ENCODE measurements at regions of chr3 and their contacts with region 1.

Region 1: DNA sequence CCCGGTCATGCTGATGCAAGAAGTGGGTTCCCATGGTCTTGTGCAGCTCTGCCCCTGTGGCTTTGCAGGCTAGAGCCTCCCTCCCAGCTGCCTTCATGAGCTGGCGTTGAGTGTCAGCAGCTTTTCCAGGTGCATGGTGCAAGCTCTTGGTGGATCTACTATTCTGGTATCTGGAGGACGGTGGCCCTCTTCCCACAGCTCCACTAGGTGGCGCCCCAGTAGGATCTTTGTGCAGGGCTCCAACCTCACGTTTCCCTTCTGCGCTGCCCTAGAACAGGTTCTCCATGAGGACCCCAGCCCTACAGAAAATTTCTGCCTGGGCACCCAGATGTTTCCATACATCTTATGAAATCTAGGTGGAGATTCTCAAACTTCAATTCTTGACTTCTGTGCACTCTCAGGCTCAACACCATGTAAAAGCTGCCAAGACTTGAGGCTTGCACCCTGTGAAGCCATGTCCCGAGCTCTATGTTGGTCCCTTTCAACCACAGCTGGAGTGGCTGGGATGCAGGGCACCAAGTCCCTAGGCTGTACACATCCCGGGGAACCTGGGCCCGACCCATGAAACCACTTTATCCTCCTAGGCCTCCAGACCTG is 238.4 kb upstream of the MDFIC2 start:
- DNase-seq: peak; percentile 43 to 82 (median 68)
- ATAC-seq: peak; percentile 76
- H3K4me3 ChIP-seq: no peak overlapping the region
- H3K4me3 Mint-ChIP-seq: no peak overlapping the region
- H3K27ac ChIP-seq: no peak overlapping the region
- H3K27ac Mint-ChIP-seq: no peak overlapping the region
- H3K4me1 ChIP-seq: no peaks in the 10 kb centered on the region
- H3K4me1 Mint-ChIP-seq: no peaks in the 10 kb centered on the region
- H3K27me3 ChIP-seq: no peaks in the 10 kb centered on the region
- H3K27me3 Mint-ChIP-seq: peaks cover 2% of the 10 kb centered on the region
- CTCF ChIP-seq: peak; percentile 60

Region 2: GRCh38 chr3:70539908-70540307 is 10.9 kb before region 1 on chr3:
- CTCF ChIA-PET with region 1: interaction called, 12 read pairs
- POLR2A ChIA-PET with region 1: no interaction called
- intact Hi-C with region 1: no loop called
- DNase-seq: peak in 1 of 9 experiments; percentile 3
- ATAC-seq: no peak
- H3K4me3 ChIP-seq: no peak overlapping the region
- H3K4me3 Mint-ChIP-seq: no peak overlapping the region
- H3K27ac ChIP-seq: no peak overlapping the region
- H3K27ac Mint-ChIP-seq: no peak overlapping the region
- H3K4me1 ChIP-seq: no peaks in the 10 kb centered on the region
- H3K4me1 Mint-ChIP-seq: no peaks in the 10 kb centered on the region
- H3K27me3 ChIP-seq: no peaks in the 10 kb centered on the region
- H3K27me3 Mint-ChIP-seq: peaks cover 11% of the 10 kb centered on the region
- CTCF ChIP-seq: no peak

Region 3: DNA sequence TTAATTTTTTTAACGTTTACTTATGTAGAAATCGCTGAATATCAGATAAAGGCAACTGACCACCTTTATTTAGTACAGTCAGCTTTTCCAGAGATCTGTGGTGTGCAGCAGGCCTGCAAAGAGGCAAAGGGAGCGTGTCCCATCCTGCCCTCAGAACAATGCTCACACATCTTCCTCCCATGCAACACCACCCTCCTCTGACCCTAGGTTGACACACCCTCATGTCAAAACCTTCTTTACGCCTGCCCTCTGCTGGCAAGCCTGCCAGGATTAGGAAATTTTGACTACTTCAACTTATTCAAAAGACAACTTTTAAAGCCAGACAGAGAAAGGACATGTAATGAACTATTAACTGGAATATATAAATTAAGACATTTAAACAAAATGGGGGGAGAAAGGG is 519.0 kb after region 1 on chr3:
- CTCF ChIA-PET with region 1: no interaction called
- POLR2A ChIA-PET with region 1: no interaction called
- intact Hi-C with region 1: loop called (anchors 1 to 10 kb)
- DNase-seq: peak; percentile 57 to 81 (median 72)
- ATAC-seq: peak; percentile 29
- H3K4me3 ChIP-seq: no peak overlapping the region
- H3K4me3 Mint-ChIP-seq: no peak overlapping the region
- H3K27ac ChIP-seq: no peak overlapping the region
- H3K27ac Mint-ChIP-seq: peak overlapping the region; percentile 91
- H3K4me1 ChIP-seq: peaks cover 89% of the 10 kb centered on the region
- H3K4me1 Mint-ChIP-seq: peaks cover 84% of the 10 kb centered on the region
- H3K27me3 ChIP-seq: no peaks in the 10 kb centered on the region
- H3K27me3 Mint-ChIP-seq: no peaks in the 10 kb centered on the region
- CTCF ChIP-seq: peak; percentile 67

Region 4: GRCh38 chr3:71591101-71591500 is 1040.3 kb after region 1 on chr3:
- CTCF ChIA-PET with region 1: interaction called, 55 read pairs
- POLR2A ChIA-PET with region 1: no interaction called
- intact Hi-C with region 1: loop called (anchors 1 kb)
- DNase-seq: no peak
- ATAC-seq: no peak
- H3K4me3 ChIP-seq: no peak overlapping the region
- H3K4me3 Mint-ChIP-seq: no peak overlapping the region
- H3K27ac ChIP-seq: no peak overlapping the region
- H3K27ac Mint-ChIP-seq: no peak overlapping the region
- H3K4me1 ChIP-seq: peaks cover 4% of the 10 kb centered on the region
- H3K4me1 Mint-ChIP-seq: peaks cover 6% of the 10 kb centered on the region
- H3K27me3 ChIP-seq: no peaks in the 10 kb centered on the region
- H3K27me3 Mint-ChIP-seq: no peaks in the 10 kb centered on the region
- CTCF ChIP-seq: no peak

Region 5: DNA sequence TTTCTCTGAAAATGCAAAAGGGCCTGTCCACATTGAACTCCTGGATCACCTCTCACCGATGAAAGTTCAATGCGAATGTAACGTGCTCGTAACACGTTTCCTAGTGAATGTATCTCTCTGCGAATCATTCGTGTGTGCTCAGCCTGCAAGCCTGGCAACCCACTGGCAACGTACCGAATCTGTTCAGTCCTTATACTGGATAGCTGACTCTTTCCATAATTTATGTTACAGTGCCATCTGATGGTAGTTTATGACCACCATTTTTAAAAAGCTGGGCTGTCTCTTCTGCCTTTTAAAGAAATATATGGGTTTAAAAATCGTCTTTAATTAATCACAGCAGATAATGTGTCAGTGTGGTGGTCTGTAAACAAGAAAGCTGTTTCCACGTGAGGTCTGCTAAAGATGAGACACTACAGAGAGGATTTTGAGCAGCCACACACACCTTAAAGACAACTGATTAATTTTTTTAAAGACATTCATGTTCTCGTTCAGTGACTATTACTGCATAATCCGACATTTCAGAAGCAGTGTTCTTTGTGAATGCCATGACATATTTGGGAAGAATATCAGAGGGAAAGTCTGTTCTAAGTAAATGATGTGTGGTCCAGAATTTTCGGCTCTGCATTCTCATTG is 1102.1 kb after region 1 on chr3:
- CTCF ChIA-PET with region 1: interaction called, 9 read pairs
- POLR2A ChIA-PET with region 1: no interaction called
- intact Hi-C with region 1: loop called in 1 of 2 experiments (anchors 10 kb)
- DNase-seq: peak in 2 of 9 experiments; percentile 17 to 47
- ATAC-seq: no peak
- H3K4me3 ChIP-seq: no peak overlapping the region
- H3K4me3 Mint-ChIP-seq: no peak overlapping the region
- H3K27ac ChIP-seq: no peak overlapping the region
- H3K27ac Mint-ChIP-seq: no peak overlapping the region
- H3K4me1 ChIP-seq: no peaks in the 10 kb centered on the region
- H3K4me1 Mint-ChIP-seq: peaks cover 2% of the 10 kb centered on the region
- H3K27me3 ChIP-seq: no peaks in the 10 kb centered on the region
- H3K27me3 Mint-ChIP-seq: no peaks in the 10 kb centered on the region
- CTCF ChIP-seq: peak; percentile 21

Region 6: GRCh38 chr3:71681224-71681668 is 1130.4 kb after region 1 on chr3:
- CTCF ChIA-PET with region 1: no interaction called
- POLR2A ChIA-PET with region 1: no interaction called
- intact Hi-C with region 1: loop called in 1 of 2 experiments (anchors 2 kb)
- DNase-seq: peak in 6 of 9 experiments; percentile 10 to 50 (median 31)
- ATAC-seq: peak; percentile 29
- H3K4me3 ChIP-seq: no peak overlapping the region
- H3K4me3 Mint-ChIP-seq: no peak overlapping the region
- H3K27ac ChIP-seq: no peak overlapping the region
- H3K27ac Mint-ChIP-seq: peak overlapping the region; percentile 18
- H3K4me1 ChIP-seq: no peaks in the 10 kb centered on the region
- H3K4me1 Mint-ChIP-seq: peaks cover 10% of the 10 kb centered on the region
- H3K27me3 ChIP-seq: no peaks in the 10 kb centered on the region
- H3K27me3 Mint-ChIP-seq: no peaks in the 10 kb centered on the region
- CTCF ChIP-seq: peak; percentile 47